ENCODE measurements at regions of chr11 and their contacts with region 1.

Region 1: DNA sequence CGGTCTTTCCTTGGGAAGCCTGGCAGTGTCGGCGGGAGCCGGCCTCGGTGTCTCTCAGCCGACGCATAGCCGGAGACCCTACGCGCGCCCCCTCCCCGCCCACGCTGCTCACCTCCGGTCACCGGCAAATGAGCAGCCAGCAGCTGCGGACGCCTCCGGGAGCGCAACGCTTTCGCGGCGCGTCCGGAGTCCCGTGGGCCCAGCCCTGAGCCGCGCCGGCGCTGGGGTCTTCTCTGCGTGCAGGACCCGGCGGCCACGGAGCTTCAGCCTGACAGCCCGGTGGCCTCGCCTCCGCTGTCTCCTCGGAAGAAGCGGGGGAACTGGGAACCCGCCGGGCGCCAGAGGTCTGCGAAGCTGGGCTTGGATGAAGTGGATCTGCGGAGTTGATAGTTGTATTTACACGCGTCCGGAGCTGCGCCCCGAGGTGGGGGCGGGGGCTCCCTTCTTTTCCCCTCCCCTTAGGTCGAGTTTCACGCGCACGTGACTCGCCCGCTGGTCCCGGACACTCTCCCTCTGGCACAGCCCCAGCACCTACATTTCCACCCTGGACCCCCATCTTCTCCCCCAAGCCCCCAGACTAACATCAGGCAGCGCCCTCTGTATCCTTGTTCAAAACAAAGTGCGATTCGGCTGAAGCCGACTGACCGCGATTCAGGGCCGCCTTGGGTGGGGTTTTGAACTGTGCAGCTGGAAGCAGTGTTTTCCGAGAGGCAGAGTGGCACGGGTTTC is at the start of gene SLC43A1:
- DNase-seq: peak; percentile 54 to 70
- ATAC-seq: peak; percentile 66 to 81 (median 78)
- H3K4me3 ChIP-seq: peak within 1 kb of the TSS; percentile 63 to 99 (median 92)
- H3K27ac ChIP-seq: peak within 1 kb of the TSS; percentile 23 to 77 (median 64)
- H3K4me1 ChIP-seq: peaks cover 0 to 21% (median 17%) of the 10 kb centered on the region in 9 donors
- H3K27me3 ChIP-seq: no peaks in the 10 kb centered on the region
- CTCF ChIP-seq: peak in 2 of 9 donors; percentile 11 to 14
- total RNA-seq, gene SLC43A1: 3.4 to 8.9 (median 4.7) TPM

Region 2: GRCh38 chr11:57480409-57481137 is 34.9 kb before region 1 on chr11:
- intact Hi-C with region 1: no loop called
- DNase-seq: peak; percentile 67 to 71
- ATAC-seq: peak in 5 of 8 donors; percentile 30 to 64 (median 43)
- H3K4me3 ChIP-seq: no peak overlapping the region
- H3K27ac ChIP-seq: no peak overlapping the region
- H3K4me1 ChIP-seq: peaks cover 11 to 42% (median 31%) of the 10 kb centered on the region in 9 donors
- H3K27me3 ChIP-seq: peaks cover 0 to 46% (median 24%) of the 10 kb centered on the region in 7 donors
- CTCF ChIP-seq: peak; percentile 49 to 81 (median 73)

Region 3: GRCh38 chr11:57499413-57499982 is 16.0 kb before region 1 on chr11:
- intact Hi-C with region 1: loop called in 2 of 10 experiments (anchors 1 to 2 kb)
- DNase-seq: peak; percentile 97 to 99
- ATAC-seq: peak; percentile 99 to 100 (median 99)
- H3K4me3 ChIP-seq: peak overlapping the region in 9 of 10 donors; percentile 2 to 47 (median 38)
- H3K27ac ChIP-seq: peak overlapping the region; percentile 48 to 90 (median 78)
- H3K4me1 ChIP-seq: peaks cover 7 to 36% (median 30%) of the 10 kb centered on the region in 9 donors
- H3K27me3 ChIP-seq: no peaks in the 10 kb centered on the region
- CTCF ChIP-seq: peak in 1 of 9 donors; percentile 16

Region 4: DNA sequence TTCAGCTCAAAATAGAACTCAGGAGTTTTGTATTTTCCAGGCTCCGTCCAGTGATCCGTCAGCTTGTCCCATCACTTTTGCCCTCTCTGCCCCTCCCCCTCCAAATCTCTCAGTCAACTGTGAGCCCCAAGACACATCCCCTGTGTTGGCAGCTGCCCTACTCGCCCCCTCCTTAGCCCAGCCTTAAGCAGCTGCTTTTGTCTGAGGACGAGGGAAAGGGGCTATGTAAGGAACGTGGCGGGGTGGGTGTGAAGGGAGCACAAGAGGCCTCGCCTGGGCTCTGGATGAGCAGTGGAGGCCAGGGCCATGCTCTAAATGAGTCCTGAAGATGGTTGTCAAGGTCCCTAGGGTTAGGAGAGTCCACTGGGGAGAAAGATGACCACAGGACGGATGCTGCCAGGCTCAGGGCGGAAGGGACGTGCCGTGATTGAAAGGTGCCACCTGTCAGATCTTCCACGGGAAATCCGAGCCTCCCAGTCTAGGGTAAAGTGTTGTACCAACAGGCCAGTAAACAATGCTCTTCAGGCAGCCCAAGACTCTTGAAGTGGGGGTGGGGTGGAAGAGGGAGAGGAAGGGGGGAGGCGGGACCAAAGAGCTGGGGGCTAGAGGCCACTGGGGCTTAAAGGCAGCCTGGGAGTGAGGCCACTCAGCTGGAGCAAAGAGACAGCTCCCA is 21.6 kb after region 1 on chr11 and contains the start of gene SMTNL1:
- intact Hi-C with region 1: no loop called
- DNase-seq: no peak
- ATAC-seq: no peak
- H3K4me3 ChIP-seq: no peak within 1 kb of the TSS
- H3K27ac ChIP-seq: no peak within 1 kb of the TSS
- H3K4me1 ChIP-seq: no peaks in the 10 kb centered on the region
- H3K27me3 ChIP-seq: no peaks in the 10 kb centered on the region
- CTCF ChIP-seq: no peak
- total RNA-seq, gene SMTNL1: not detected

Measured in heart right ventricle (tissue), 16 donors.